Activated CD8-positive, alpha-beta T cell treated with anti-CD3 and anti-CD28 coated beads, Interleukin-2, amount 10 ng/mL, durations not matched to agents 7 days and 5 days (primary cell): ENCODE measurements at regions of chr19 and their contacts with region 1.

Region 1: DNA sequence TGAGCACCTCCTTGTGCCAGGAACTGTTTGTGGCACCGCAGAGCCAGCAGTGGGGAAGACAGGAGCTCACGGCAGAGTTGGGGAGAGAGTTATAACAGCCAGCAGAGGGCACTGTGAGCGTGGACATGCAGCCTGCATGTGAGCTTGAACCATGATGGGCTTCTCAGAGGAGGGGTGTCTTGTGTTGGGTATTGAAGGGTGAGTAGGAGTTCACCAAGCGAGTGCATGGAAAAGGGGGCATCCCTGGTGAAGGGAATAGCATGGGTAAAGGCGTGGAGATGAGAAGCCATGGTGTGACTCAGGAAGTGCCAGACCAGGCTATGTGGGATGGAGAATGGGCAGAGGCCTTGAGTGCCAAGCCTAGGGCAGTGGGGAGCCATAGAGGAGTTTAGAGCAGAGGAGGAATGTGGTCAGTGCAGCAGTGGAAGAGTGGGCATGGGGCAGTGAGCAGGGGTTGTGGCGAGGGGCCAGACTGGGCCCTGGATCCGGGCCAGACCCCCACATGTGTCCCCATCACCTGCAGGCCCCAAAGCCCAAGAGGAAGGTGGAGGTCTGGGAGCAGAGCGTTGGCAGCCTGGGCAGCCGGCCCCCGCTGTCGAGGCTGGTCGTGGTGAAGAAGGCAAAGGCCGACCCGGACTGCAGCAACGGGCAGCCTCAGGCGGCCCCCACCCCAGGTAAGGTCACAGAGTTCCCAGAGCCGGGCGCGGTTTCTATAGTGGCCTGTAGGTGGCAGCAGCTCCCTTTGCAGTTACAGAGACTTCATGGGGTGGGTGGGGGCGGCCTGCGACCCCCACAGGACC is 11.8 kb upstream of the SHD start:
- DNase-seq: peak; percentile 77
- ATAC-seq: peak; percentile 60
- H3K4me3 Mint-ChIP-seq: no peak overlapping the region
- H3K27ac Mint-ChIP-seq: peak overlapping the region; percentile 78
- H3K4me1 Mint-ChIP-seq: peaks cover 43% of the 10 kb centered on the region
- H3K27me3 Mint-ChIP-seq: no peaks in the 10 kb centered on the region

Region 2: DNA sequence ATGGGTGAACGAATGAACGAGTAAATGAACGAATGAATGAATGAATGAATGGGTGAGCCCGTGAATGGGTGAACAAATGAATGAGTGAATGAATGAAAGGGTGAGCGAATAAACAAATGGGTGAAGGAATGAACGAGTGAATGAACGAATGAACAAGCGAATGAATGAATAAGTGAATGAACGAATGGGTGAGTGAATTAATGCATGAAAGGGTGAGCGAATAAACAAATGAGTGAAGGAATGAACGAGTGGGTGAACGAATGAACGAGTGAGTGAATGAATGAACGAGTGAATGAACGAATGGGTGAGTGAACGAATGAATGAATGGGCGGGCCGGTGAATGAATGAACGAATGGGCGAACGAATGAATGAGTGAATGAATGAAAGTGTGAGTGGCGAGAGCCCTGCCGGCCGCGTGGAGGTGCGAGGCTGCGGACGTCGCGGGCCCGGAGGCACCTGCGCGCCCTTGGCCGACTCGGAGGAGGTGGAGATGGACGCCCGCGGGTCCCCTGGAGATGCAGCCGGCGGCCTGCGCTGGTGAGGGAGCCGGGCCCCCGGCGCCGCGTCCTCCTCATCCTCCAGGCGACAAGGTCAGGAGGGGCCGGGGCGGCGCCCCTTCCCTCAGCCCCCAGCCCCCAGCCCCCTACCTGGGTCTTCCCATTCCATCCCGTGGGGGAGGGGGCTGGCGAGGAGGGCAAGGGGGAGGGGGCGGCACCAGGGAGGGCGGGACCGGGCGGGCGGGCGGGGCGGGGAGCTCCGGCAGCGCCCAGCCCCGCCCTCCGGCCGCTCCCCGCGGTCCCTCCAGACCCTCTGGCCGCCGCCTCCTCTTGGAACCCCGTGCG is 69.5 kb before region 1 on chr19:
- CTCF ChIA-PET with region 1: no interaction called
- POLR2A ChIA-PET with region 1: no interaction called
- DNase-seq: no peak
- ATAC-seq: peak; percentile 44
- H3K4me3 Mint-ChIP-seq: no peak overlapping the region
- H3K27ac Mint-ChIP-seq: no peak overlapping the region
- H3K4me1 Mint-ChIP-seq: peaks cover 9% of the 10 kb centered on the region
- H3K27me3 Mint-ChIP-seq: peaks cover 30% of the 10 kb centered on the region

Region 3: GRCh38 chr19:4246767-4247593 is 20.3 kb before region 1 on chr19 and contains the start of gene YJU2:
- CTCF ChIA-PET with region 1: interaction called, 19 read pairs
- POLR2A ChIA-PET with region 1: interaction called, 3 read pairs
- DNase-seq: peak; percentile 100
- ATAC-seq: peak; percentile 98
- H3K4me3 Mint-ChIP-seq: peak within 1 kb of the TSS; percentile 84
- H3K27ac Mint-ChIP-seq: peak within 1 kb of the TSS; percentile 96
- H3K4me1 Mint-ChIP-seq: peaks cover 22% of the 10 kb centered on the region
- H3K27me3 Mint-ChIP-seq: peaks cover 2% of the 10 kb centered on the region
- total RNA-seq, gene YJU2: 24.8 to 26.1 TPM

Region 4: GRCh38 chr19:4297901-4298809 is 30.9 kb after region 1 on chr19:
- CTCF ChIA-PET with region 1: interaction called, 10 read pairs
- POLR2A ChIA-PET with region 1: no interaction called
- DNase-seq: peak; percentile 42
- ATAC-seq: peak; percentile 50
- H3K4me3 Mint-ChIP-seq: no peak overlapping the region
- H3K27ac Mint-ChIP-seq: peak overlapping the region; percentile 75
- H3K4me1 Mint-ChIP-seq: peaks cover 37% of the 10 kb centered on the region
- H3K27me3 Mint-ChIP-seq: no peaks in the 10 kb centered on the region

Region 5: DNA sequence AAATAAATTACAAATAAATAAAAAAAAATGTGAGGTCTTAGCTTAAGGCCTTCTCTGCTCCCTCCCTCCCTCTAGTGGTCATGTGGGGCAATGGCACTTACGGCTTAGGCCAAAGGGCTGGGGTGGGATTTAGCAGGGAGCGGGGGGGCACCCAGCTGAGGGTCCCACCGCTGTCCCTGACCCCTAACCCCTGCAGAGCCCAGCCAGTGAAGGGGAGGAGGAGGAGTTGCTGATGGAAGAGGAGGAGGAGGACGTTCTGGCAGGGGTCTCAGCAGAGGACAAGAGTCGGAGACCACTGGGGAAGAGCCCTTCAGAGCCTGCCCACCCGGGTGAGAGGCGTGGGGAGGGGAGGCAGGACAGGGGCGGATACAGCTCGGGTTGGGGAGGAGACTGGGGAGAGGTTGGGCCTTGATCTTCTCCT is 85.4 kb after region 1 on chr19:
- CTCF ChIA-PET with region 1: interaction called, 49 read pairs
- POLR2A ChIA-PET with region 1: interaction called, 6 read pairs
- DNase-seq: peak; percentile 77
- ATAC-seq: peak; percentile 71
- H3K4me3 Mint-ChIP-seq: no peak overlapping the region
- H3K27ac Mint-ChIP-seq: peak overlapping the region; percentile 74
- H3K4me1 Mint-ChIP-seq: no peaks in the 10 kb centered on the region
- H3K27me3 Mint-ChIP-seq: no peaks in the 10 kb centered on the region

Region 6: GRCh38 chr19:4524808-4525562 is 257.7 kb after region 1 on chr19:
- CTCF ChIA-PET with region 1: interaction called, 12 read pairs
- POLR2A ChIA-PET with region 1: no interaction called
- DNase-seq: peak; percentile 76
- ATAC-seq: peak; percentile 72
- H3K4me3 Mint-ChIP-seq: no peak overlapping the region
- H3K27ac Mint-ChIP-seq: no peak overlapping the region
- H3K4me1 Mint-ChIP-seq: no peaks in the 10 kb centered on the region
- H3K27me3 Mint-ChIP-seq: no peaks in the 10 kb centered on the region